Activated B cell treated with CpG ODN at 0.5 μM for 24 hours (primary cell): ENCODE measurements at regions of chr1 and their contacts with region 1.

Region 1: GRCh38 chr1:156601122-156601830 is at the start of gene GPATCH4:
- DNase-seq: peak; percentile 66
- ATAC-seq: peak; percentile 74
- H3K4me3 Mint-ChIP-seq: peak within 1 kb of the TSS; percentile 99
- H3K27ac Mint-ChIP-seq: peak within 1 kb of the TSS; percentile 99
- H3K4me1 Mint-ChIP-seq: peaks cover 41% of the 10 kb centered on the region
- H3K27me3 Mint-ChIP-seq: no peaks in the 10 kb centered on the region
- CTCF ChIP-seq: no peak
- total RNA-seq, gene GPATCH4: 64.6 and 71.8 TPM in 2 replicates

Region 2: DNA sequence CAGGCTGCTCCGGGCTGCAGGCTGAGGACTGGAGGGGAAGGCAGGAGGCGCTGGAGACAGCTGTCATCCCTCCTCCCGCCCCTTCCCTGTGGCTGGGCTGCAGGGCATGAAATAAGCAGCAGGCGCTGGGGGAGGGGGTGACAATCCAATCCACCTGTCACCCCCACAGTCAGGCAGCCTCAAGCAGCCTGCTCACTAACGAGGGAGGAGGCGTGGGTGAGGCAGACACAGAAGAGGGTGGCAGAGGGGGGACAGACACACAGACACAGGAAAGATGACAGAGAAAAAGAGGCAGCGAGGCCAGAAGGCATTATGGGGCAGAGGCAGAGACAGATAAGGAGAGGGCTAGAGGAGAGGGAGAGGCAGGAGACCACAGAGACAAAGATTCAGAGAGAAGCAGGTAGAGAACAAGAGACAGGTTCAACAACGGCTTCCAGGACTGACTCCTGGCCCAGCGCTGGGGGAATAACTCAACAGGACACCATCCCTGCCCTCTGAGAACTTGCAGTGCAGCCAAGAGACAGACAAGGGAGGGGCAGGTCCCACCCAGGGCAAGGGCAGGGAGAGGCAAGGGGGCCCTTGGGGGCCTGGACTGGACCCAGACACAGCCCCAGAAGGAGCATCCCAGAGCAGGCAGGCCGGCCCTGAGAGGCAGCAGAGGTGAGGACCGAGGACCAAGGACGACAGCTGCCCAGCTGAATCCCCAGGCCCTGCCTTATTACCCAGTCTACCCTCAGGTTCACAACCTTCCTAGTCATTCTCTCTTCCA is 111.9 kb before region 1 on chr1:
- CTCF ChIA-PET with region 1: no interaction called
- POLR2A ChIA-PET with region 1: interaction called, 18 read pairs
- intact Hi-C with region 1: no loop called
- DNase-seq: no peak
- ATAC-seq: no peak
- H3K4me3 Mint-ChIP-seq: peak overlapping the region; percentile 88
- H3K27ac Mint-ChIP-seq: peak overlapping the region; percentile 97
- H3K4me1 Mint-ChIP-seq: peaks cover 96% of the 10 kb centered on the region
- H3K27me3 Mint-ChIP-seq: no peaks in the 10 kb centered on the region
- CTCF ChIP-seq: no peak

Region 3: DNA sequence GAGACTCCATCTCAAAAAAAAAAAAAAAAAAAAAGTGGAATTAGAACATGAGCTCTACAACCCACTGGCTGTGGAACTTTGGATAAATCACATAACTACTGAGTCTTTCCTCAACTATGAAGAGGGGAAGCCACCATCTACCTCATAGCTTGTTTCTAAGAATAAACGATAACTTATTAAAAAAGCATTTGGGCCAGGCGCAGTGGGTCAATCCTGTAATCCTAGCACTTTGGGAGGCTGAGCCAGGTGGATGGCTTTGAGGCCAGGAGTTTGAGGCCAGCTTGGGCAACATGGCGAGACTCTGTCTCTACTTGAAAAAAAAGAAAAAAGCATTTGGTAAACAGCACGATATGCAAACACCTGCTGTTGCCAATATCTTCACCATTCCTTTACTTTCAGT is 68.9 kb before region 1 on chr1:
- CTCF ChIA-PET with region 1: no interaction called
- POLR2A ChIA-PET with region 1: interaction called, 13 read pairs
- intact Hi-C with region 1: no loop called
- DNase-seq: no peak
- ATAC-seq: no peak
- H3K4me3 Mint-ChIP-seq: no peak overlapping the region
- H3K27ac Mint-ChIP-seq: no peak overlapping the region
- H3K4me1 Mint-ChIP-seq: no peaks in the 10 kb centered on the region
- H3K27me3 Mint-ChIP-seq: no peaks in the 10 kb centered on the region
- CTCF ChIP-seq: no peak

Region 4: GRCh38 chr1:156639601-156640101 is 38.4 kb after region 1 on chr1:
- CTCF ChIA-PET with region 1: no interaction called
- POLR2A ChIA-PET with region 1: no interaction called
- intact Hi-C with region 1: no loop called
- DNase-seq: no peak
- ATAC-seq: no peak
- H3K4me3 Mint-ChIP-seq: no peak overlapping the region
- H3K27ac Mint-ChIP-seq: no peak overlapping the region
- H3K4me1 Mint-ChIP-seq: peaks cover 20% of the 10 kb centered on the region
- H3K27me3 Mint-ChIP-seq: peaks cover 67% of the 10 kb centered on the region
- CTCF ChIP-seq: no peak